GM23248 (cell line): ENCODE measurements at regions of chr20 and their contacts with region 1.

Region 1: GRCh38 chr20:53915446-53916172 is 154.8 kb downstream of the BCAS1 start:
- DNase-seq: peak; percentile 95
- H3K4me3 ChIP-seq: peak overlapping the region; percentile 74
- H3K27ac ChIP-seq: peak overlapping the region; percentile 98
- H3K4me1 ChIP-seq: peaks cover 49% of the 10 kb centered on the region
- H3K27me3 ChIP-seq: no peaks in the 10 kb centered on the region

Region 2: GRCh38 chr20:53578492-53579222 is 337.0 kb before region 1 on chr20:
- in situ Hi-C with region 1: loop called (anchors 10 kb)
- DNase-seq: peak; percentile 93
- H3K4me3 ChIP-seq: peak overlapping the region; percentile 61
- H3K27ac ChIP-seq: peak overlapping the region; percentile 95
- H3K4me1 ChIP-seq: peaks cover 57% of the 10 kb centered on the region
- H3K27me3 ChIP-seq: no peaks in the 10 kb centered on the region

Region 3: GRCh38 chr20:53750827-53751619 is 164.6 kb before region 1 on chr20:
- in situ Hi-C with region 1: loop called (anchors 25 kb)
- DNase-seq: peak; percentile 83
- H3K4me3 ChIP-seq: no peak overlapping the region
- H3K27ac ChIP-seq: peak overlapping the region; percentile 90
- H3K4me1 ChIP-seq: peaks cover 32% of the 10 kb centered on the region
- H3K27me3 ChIP-seq: no peaks in the 10 kb centered on the region

Region 4: GRCh38 chr20:53980031-53980465 is 64.4 kb after region 1 on chr20:
- in situ Hi-C with region 1: no loop called
- DNase-seq: no peak
- H3K4me3 ChIP-seq: no peak overlapping the region
- H3K27ac ChIP-seq: no peak overlapping the region
- H3K4me1 ChIP-seq: peaks cover 16% of the 10 kb centered on the region
- H3K27me3 ChIP-seq: no peaks in the 10 kb centered on the region

Region 5: DNA sequence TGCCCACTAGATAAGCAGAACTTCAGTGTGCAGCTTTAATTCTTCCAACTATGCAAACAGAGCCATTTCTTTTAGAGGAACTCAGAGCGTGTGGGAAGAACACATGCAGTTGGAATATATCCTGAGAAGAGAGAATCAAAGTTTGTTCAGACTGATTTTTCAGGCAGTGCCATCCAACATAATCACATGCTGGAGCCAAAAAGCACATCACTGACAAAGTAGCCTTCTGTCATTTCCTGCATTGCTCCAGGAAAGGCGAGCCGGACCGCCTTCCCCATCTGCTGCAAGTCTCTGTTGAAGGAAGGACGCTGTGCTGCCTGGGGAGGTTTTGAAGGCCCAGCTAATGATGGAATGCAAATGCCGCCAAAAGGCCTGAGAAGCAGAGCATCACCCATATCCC is 658.2 kb after region 1 on chr20:
- in situ Hi-C with region 1: no loop called
- DNase-seq: no peak
- H3K4me3 ChIP-seq: no peak overlapping the region
- H3K27ac ChIP-seq: no peak overlapping the region
- H3K4me1 ChIP-seq: no peaks in the 10 kb centered on the region
- H3K27me3 ChIP-seq: no peaks in the 10 kb centered on the region